PC-9 (cell line): ENCODE measurements at regions of chr12 and their contacts with region 1.

Region 1: DNA sequence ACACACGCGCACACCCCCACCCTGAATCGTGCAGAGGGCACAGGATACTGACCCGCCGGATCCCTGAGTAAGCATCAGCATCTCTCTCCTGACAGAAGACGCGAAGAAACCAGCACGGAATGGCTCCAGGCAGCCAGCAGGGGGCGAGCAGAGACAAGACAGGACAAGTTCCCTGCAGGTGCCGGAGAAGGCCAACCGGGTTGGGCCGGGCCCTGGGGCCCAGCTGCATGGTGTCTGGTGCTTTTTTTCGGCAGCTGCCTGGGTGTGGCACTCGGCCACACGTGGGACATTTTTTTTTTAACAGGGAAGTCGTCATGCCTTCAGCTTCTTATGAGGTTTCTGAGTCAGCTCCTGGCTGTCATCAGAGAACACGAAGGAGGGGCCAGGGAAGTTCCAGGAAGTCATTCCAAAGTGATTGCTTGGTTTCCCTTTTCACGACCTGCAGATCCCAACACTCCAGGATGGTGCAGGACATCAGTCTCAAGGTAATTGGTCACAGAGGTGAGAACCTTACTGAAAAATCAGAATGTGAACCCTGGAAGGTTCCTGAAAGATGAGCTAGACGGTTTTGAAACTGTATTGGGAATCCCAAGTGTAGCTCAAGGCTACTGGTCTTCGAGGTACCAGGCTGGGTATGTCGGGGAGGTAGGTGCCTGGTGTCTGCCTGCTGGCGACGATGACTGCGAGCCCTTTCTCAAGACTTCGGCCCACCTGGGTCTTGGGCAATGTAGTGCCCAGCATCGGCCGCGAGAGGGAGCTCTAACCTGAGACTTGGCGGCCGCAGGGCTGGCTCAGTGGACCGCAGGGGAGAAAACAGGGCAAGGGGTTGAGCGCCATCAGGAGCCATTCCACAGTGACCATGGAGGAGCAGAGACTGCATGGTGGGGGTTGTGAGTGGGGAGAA is 190.8 kb upstream of the PRMT8 start:
- DNase-seq: peak; percentile 97
- H3K4me3 ChIP-seq: peak overlapping the region; percentile 35; the same call in 1 of the 2 replicates
- H3K27ac ChIP-seq: peak overlapping the region; percentile 89
- H3K4me1 ChIP-seq: peaks cover 31% of the 10 kb centered on the region
- H3K27me3 ChIP-seq: peaks cover 30% of the 10 kb centered on the region
- CTCF ChIP-seq: peak; percentile 100

Region 2: DNA sequence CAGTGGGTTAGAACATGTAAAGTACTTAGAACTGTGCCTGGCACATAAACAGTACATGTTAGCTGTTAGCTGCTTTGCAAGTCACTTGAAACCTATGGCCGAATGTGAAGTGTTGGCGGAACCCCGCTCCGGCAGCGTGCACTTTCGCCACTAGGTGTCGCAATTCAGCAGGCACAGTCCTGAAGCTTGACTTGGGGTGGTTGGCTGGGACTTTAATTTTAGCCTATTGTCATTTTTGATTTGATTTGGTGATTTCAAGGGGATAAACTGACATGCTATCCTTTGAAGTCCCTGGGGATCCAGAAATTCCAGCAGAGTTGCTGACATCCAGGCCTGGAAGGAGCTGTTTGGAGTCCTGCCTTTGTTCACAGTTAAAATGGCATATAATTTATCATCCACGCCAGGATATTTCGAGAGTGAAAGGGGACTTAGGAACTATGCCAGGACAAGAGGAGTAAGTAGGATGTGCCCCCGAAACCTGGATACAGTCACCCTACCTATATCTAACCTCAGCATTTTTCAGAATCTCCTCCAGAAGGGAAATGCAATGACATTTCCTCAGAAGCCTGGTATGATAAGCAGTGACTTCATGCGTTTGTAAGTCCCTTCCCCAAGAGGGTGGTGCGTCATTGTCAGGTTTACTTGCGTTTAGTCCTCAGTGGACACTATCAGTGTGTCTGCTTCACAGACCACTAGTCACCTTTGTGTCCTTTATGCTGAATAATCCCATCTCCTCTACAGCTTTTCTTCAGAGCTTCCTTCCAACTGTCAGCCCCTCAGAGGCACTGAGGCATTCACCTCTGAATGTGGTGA is 226.5 kb before region 1 on chr12:
- CTCF ChIA-PET with region 1: interaction called, 4 read pairs
- POLR2A ChIA-PET with region 1: no interaction called
- intact Hi-C with region 1: loop called (anchors 10 kb)
- DNase-seq: peak; percentile 67 to 88
- H3K4me3 ChIP-seq: no peak overlapping the region
- H3K27ac ChIP-seq: no peak overlapping the region
- H3K4me1 ChIP-seq: peaks cover 6% of the 10 kb centered on the region
- H3K27me3 ChIP-seq: no peaks in the 10 kb centered on the region
- CTCF ChIP-seq: peak; percentile 99

Region 3: GRCh38 chr12:3225154-3225795 is 74.9 kb before region 1 on chr12:
- CTCF ChIA-PET with region 1: no interaction called
- POLR2A ChIA-PET with region 1: no interaction called
- intact Hi-C with region 1: no loop called
- DNase-seq: no peak
- H3K4me3 ChIP-seq: no peak overlapping the region
- H3K27ac ChIP-seq: no peak overlapping the region
- H3K4me1 ChIP-seq: no peaks in the 10 kb centered on the region
- H3K27me3 ChIP-seq: 0 out of 2 replicates have a peak, but pooled peaks cover 24% of the 10 kb centered on the region
- CTCF ChIP-seq: no peak

Region 4: DNA sequence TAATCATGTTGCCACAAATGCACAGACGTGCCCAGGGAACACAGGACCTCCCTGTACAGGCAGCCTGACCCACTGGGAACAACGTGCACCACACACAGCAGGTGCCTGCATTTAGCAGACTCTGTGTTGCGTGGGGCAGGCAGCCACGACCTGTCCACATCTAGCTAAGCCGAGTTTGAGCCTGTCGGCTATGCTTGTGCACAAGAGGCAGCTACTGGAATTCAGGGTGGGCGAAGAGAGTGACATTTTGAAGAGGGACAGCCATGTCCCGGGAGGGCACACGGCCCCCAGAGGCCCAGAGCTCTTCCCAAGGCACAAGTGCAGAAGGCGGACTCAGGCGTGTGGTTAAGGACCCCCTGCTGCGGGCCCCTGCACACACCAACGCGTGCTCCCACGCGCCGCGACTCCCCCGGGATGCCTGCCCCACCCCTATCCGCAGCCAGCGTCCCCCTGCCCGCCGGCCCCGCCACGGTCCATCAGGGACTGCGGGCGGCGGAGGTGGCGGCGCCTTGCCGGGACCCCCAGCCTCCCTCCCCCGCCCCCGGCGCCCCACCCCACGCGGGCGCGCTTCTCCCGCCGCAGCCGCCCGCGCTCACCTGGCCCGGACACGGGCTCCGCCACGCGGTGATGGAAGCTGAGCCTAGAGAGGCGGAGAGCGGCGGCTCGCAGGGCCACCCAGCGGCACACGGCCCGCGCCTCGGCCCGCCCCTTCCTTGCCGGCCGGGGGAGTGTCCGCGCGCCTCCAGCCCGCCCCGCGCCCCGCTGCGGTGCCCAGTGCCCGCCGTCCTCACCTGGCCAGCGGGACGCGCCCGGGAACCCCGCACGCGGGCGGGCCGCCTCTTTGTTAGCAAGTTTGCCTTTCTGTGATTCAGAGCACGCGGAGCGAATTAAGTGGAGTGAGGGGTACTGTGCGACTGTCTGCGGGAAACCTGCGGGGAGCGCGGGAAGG is 65.6 kb after region 1 on chr12:
- CTCF ChIA-PET with region 1: no interaction called
- POLR2A ChIA-PET with region 1: no interaction called
- intact Hi-C with region 1: loop called (anchors 5 kb)
- DNase-seq: no peak
- H3K4me3 ChIP-seq: no peak overlapping the region
- H3K27ac ChIP-seq: no peak overlapping the region
- H3K4me1 ChIP-seq: no peaks in the 10 kb centered on the region
- H3K27me3 ChIP-seq: peaks cover 89% of the 10 kb centered on the region
- CTCF ChIP-seq: no peak

Region 5: GRCh38 chr12:3523058-3523457 is 222.9 kb after region 1 on chr12:
- CTCF ChIA-PET with region 1: interaction called, 14 read pairs
- POLR2A ChIA-PET with region 1: no interaction called
- intact Hi-C with region 1: loop called (anchors 1 kb)
- DNase-seq: no peak
- H3K4me3 ChIP-seq: no peak overlapping the region
- H3K27ac ChIP-seq: no peak overlapping the region
- H3K4me1 ChIP-seq: no peaks in the 10 kb centered on the region
- H3K27me3 ChIP-seq: peaks cover 45% of the 10 kb centered on the region; the same call in 1 of the 2 replicates
- CTCF ChIP-seq: peak; percentile 54; the same call in 1 of the 2 replicates

Region 6: GRCh38 chr12:3777206-3777809 is 477.1 kb after region 1 on chr12:
- CTCF ChIA-PET with region 1: interaction called, 4 read pairs
- POLR2A ChIA-PET with region 1: no interaction called
- intact Hi-C with region 1: loop called (anchors 1 kb)
- DNase-seq: peak in 1 of 2 experiments; percentile 5
- H3K4me3 ChIP-seq: no peak overlapping the region
- H3K27ac ChIP-seq: no peak overlapping the region
- H3K4me1 ChIP-seq: no peaks in the 10 kb centered on the region
- H3K27me3 ChIP-seq: peaks cover 17% of the 10 kb centered on the region; the same call in 1 of the 2 replicates
- CTCF ChIP-seq: peak; percentile 70

Region 7: DNA sequence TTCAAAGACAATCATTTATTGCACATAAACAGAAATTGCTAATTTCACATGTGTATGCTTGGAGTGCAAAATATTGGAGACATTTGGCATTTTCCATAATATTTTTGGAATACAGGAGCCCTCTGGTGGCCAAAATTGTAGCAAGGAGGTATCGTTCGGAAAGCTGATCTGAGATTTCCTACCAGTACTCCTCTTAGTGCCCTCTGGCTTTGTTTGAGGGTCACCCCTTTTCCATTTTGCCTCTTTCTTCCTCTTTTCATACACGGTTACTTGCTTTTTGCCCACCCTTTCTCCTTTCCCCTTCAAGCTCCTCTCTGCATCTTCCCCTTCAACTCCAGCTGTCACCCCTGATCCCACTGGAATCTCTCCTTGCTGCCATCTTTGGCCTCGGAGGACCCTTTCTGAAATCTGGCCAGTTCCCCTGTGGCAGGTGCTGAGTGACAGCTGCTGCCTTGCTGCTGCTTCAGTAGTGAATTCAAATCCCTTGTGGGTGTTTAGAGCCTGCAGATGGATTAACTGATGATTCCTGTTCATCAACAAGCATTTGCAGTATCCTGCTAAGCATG is 737.6 kb after region 1 on chr12:
- CTCF ChIA-PET with region 1: no interaction called
- POLR2A ChIA-PET with region 1: no interaction called
- intact Hi-C with region 1: loop called (anchors 1 kb)
- DNase-seq: no peak
- H3K4me3 ChIP-seq: no peak overlapping the region
- H3K27ac ChIP-seq: no peak overlapping the region
- H3K4me1 ChIP-seq: no peaks in the 10 kb centered on the region
- H3K27me3 ChIP-seq: peaks cover 46% of the 10 kb centered on the region
- CTCF ChIP-seq: peak; percentile 77